ENCODE measurements at regions of chr17 and their contacts with region 1.

Region 1: GRCh38 chr17:46002311-46002972 is 3.4 kb downstream of the STH start:
- DNase-seq: peak; percentile 84
- CTCF ChIP-seq: peak; percentile 78

Region 2: GRCh38 chr17:45914047-45914717 is 88.3 kb before region 1 on chr17:
- CTCF ChIA-PET with region 1: no interaction called
- POLR2A ChIA-PET with region 1: no interaction called
- DNase-seq: no peak
- CTCF ChIP-seq: no peak

Region 3: GRCh38 chr17:45990886-45991285 is 11.6 kb before region 1 on chr17:
- CTCF ChIA-PET with region 1: interaction called, 10 read pairs
- POLR2A ChIA-PET with region 1: no interaction called
- DNase-seq: no peak
- CTCF ChIP-seq: no peak

Region 4: DNA sequence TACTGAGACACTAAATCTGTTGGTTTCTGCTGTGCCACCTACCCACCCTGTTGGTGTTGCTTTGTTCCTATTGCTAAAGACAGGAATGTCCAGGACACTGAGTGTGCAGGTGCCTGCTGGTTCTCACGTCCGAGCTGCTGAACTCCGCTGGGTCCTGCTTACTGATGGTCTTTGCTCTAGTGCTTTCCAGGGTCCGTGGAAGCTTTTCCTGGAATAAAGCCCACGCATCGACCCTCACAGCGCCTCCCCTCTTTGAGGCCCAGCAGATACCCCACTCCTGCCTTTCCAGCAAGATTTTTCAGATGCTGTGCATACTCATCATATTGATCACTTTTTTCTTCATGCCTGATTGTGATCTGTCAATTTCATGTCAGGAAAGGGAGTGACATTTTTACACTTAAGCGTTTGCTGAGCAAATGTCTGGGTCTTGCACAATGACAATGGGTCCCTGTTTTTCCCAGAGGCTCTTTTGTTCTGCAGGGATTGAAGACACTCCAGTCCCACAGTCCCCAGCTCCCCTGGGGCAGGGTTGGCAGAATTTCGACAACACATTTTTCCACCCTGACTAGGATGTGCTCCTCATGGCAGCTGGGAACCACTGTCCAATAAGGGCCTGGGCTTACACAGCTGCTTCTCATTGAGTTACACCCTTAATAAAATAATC is 11.2 kb after region 1 on chr17:
- CTCF ChIA-PET with region 1: interaction called, 20 read pairs
- POLR2A ChIA-PET with region 1: interaction called, 4 read pairs
- DNase-seq: no peak
- CTCF ChIP-seq: no peak

Region 5: GRCh38 chr17:46020023-46020761 is 17.8 kb after region 1 on chr17:
- CTCF ChIA-PET with region 1: interaction called, 20 read pairs
- POLR2A ChIA-PET with region 1: no interaction called
- DNase-seq: peak; percentile 61
- CTCF ChIP-seq: no peak

Region 6: GRCh38 chr17:46044286-46044928 is 42.0 kb after region 1 on chr17:
- CTCF ChIA-PET with region 1: interaction called, 29 read pairs
- POLR2A ChIA-PET with region 1: no interaction called
- DNase-seq: no peak
- CTCF ChIP-seq: peak; percentile 66

Region 7: GRCh38 chr17:46184696-46185095 is 182.3 kb after region 1 on chr17:
- CTCF ChIA-PET with region 1: interaction called, 20 read pairs
- POLR2A ChIA-PET with region 1: no interaction called
- DNase-seq: no peak
- CTCF ChIP-seq: no peak

Region 8: DNA sequence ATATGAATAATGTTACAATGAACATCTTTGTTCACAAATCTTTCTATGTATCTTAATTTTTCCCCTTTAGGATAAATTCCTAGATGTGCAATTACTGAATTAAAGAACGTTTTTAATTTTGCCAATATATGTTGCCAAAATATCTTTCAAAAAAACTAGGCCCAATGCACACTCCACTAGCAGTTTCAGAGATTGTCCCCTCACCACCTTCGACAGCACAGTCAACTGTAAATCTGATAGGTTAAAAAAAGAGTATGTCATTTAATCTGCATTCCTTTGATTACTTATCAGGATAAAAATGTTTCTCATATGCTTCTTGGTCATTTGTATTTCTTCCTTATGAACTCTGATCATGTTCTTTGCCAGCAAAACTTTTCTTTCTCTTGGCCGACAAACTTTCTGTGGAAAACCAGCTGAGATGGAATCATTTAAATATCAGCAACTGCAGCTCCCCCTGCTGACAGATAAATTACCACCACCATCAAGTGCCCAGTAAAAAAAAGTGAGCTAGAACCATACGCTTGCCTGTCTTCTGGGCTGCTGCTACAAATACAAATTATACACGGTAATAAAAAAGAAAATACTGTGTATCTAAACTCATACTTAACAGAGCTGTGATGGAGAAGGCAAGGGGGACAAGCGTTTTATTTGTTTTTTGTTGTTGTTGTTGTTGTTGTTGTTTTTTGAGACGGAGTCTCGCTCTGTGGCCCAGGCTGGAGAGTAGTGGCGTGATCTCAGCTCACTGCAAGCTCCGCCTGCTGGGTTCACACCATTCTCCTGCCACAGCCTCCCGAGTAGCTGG is 210.4 kb after region 1 on chr17:
- CTCF ChIA-PET with region 1: interaction called, 47 read pairs
- POLR2A ChIA-PET with region 1: no interaction called
- DNase-seq: peak; percentile 73
- CTCF ChIP-seq: peak; percentile 49